ENCODE measurements at regions of chr19 and their contacts with region 1.

Region 1: DNA sequence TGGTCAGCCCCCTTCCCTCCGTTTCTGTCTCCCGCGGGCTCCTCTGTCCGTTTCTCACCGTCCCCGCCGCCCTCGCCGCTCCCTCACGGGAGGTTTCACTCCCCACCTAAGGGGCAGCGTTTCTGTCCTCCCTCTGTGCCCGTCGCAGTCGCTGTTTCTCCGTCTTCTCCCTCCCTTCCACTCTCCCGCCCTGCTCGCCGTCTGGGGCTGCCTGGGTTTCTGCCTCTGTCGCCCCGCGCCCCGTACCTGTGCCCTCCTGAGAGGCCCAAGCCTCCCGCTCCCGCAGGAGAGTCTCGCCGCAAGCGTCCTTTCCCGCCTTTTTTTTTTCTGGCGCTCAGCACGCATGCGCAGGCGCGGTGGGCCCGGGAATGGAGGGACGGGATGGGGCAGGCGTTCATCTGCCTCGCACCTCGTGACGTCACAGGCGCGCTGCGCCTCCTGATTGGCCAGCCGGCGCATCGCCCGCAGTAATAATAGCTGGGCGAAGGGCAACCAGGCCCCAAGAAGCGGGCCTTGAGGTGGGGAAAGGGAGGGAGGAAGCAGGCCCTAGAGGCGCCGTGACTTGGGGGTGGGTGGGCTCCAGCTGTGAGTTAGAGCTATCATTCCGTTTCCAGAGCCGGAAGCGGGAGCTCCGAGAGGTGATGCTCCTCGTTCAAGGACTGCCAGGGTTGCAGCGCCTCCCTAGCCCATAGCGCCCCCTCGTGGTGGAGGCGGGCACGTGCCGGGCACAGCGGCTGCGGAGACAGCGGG is 15.4 kb downstream of the SSC5D start:
- DNase-seq: peak; percentile 86
- H3K4me3 ChIP-seq: peak overlapping the region; percentile 15 to 30
- H3K27ac ChIP-seq: no peak overlapping the region
- H3K4me1 ChIP-seq: no peaks in the 10 kb centered on the region
- H3K27me3 ChIP-seq: no peaks in the 10 kb centered on the region
- CTCF ChIP-seq: peak; percentile 95 to 99 (median 98)
- POLR2A ChIP-seq: peak; percentile 19

Region 2: DNA sequence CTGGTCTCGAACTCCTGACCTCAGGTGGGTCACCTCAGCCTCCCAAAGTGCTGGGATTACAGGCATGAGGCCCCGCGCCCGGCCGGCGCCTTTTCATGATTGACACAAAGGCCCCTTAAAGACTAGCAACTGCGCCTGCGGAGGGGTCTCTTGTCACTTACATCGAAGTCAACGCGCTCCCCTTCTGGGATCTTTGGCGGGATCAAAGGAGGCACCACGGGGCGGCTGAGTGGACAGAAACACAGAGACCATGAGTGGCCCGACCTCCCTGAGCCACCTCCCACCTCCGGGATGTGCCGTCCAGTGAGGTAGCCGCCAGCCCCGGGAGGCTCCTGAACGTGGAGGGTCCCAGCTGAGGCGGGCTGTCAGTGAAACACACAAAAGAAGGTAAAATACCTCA is 362.0 kb before region 1 on chr19:
- intact Hi-C with region 1: loop called (anchors 2 kb)
- DNase-seq: no peak
- H3K4me3 ChIP-seq: no peak overlapping the region
- H3K27ac ChIP-seq: no peak overlapping the region
- H3K4me1 ChIP-seq: peaks cover 4% of the 10 kb centered on the region
- H3K27me3 ChIP-seq: peaks cover 42% of the 10 kb centered on the region
- CTCF ChIP-seq: no peak
- POLR2A ChIP-seq: no peak

Region 3: DNA sequence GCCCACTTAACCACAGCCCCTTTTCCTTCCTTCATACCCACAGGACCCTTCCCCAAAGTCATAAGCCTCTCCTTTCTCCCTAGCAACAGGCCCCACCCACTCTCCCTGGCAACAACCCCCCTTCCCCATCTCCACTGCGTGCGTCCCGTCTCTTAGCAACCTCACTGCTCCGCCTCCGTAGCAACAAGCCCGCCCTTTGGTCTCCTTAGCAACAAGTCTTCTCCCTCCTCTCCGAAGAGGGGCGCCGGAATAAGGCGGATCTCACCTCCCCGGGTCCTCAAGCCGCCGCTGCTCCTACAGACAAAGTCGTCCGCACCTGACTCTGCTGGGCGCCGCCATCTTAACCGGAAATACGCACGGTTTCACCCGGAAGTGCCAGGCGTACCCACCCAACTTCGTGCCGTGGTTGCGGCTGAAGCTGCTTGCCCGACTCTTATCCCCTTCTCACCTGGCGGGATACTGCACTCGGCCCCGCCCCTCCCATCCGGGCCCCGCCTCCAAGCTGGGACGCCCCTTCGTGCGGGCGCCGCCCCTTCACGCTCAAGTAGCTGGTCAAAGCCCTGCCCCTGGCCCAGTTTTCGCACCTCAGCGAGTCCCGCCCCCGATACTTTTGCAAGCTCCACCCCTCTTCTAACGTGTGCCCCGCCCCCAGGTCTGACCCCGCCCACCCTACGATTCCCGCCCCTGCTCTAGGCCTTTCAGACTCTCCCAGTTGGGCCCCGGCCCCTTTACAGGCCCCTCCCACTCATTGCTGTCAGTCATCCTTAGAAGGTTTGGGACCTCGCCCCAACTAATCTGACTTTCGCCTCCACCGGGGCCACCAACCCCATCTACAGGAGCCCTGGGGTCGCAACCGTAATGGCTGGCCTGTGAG is 223.7 kb before region 1 on chr19 and contains the start of gene HSPBP1:
- intact Hi-C with region 1: loop called (anchors 10 kb)
- DNase-seq: peak; percentile 94
- H3K4me3 ChIP-seq: peak within 1 kb of the TSS; percentile 53 to 69
- H3K27ac ChIP-seq: peak within 1 kb of the TSS; percentile 68 to 81
- H3K4me1 ChIP-seq: peaks cover 3% of the 10 kb centered on the region
- H3K27me3 ChIP-seq: no peaks in the 10 kb centered on the region
- CTCF ChIP-seq: peak in 1 of 4 experiments; percentile 6
- POLR2A ChIP-seq: peak; percentile 26
- total RNA-seq, gene HSPBP1: 33.6 to 36.0 TPM

Region 4: GRCh38 chr19:55467236-55468053 is 36.2 kb before region 1 on chr19:
- intact Hi-C with region 1: loop called (anchors 2 kb)
- DNase-seq: peak; percentile 27
- H3K4me3 ChIP-seq: no peak overlapping the region
- H3K27ac ChIP-seq: no peak overlapping the region
- H3K4me1 ChIP-seq: no peaks in the 10 kb centered on the region
- H3K27me3 ChIP-seq: no peaks in the 10 kb centered on the region
- CTCF ChIP-seq: peak; percentile 86 to 97 (median 93)
- POLR2A ChIP-seq: no peak

Measured in prostate gland (tissue), 2 donors.